IMR-90 (cell line): ENCODE measurements at regions of chr14 and their contacts with region 1.

Region 1: DNA sequence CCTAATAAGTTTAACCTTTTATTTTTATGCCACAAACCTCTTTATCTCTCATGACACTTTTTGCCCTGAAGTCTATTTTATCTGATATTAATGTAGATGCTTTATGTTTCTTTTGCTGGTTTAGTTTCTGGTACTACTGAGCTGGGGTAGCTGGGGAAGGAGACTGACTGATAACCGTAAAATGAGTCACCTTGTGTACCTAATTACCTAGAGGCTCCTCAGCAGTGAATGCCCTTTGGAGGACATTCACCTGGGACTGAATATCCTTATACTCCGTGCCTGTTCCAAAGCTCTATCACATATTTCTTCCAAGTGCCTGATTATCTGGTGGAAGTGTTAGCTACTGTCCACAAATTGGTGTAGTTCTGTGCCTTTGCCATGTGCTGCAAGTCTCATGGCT is 13.9 kb downstream of the ATL1 start:
- DNase-seq: no peak
- ATAC-seq: no peak
- H3K4me3 ChIP-seq: no peak overlapping the region
- H3K27ac ChIP-seq: no peak overlapping the region
- H3K4me1 ChIP-seq: peaks cover 2% of the 10 kb centered on the region; the same call in 1 of the 2 replicates
- H3K27me3 ChIP-seq: no peaks in the 10 kb centered on the region
- CTCF ChIP-seq: no peak
- POLR2A ChIP-seq: no peak
- RAD21 ChIP-seq: no peak

Region 2: GRCh38 chr14:50085570-50086320 is 488.1 kb before region 1 on chr14:
- CTCF ChIA-PET with region 1: no interaction called
- POLR2A ChIA-PET with region 1: no interaction called
- dilution Hi-C with region 1: no loop called
- in situ Hi-C with region 1: no loop called
- intact Hi-C with region 1: no loop called
- DNase-seq: peak; percentile 77
- ATAC-seq: peak; percentile 51; the same call in 1 of the 2 replicates
- H3K4me3 ChIP-seq: no peak overlapping the region
- H3K27ac ChIP-seq: no peak overlapping the region
- H3K4me1 ChIP-seq: peaks cover 13% of the 10 kb centered on the region
- H3K27me3 ChIP-seq: no peaks in the 10 kb centered on the region
- CTCF ChIP-seq: no peak
- POLR2A ChIP-seq: no peak
- RAD21 ChIP-seq: no peak

Region 3: GRCh38 chr14:50967790-50968189 is 393.9 kb after region 1 on chr14:
- CTCF ChIA-PET with region 1: no interaction called
- POLR2A ChIA-PET with region 1: interaction called, 10 read pairs
- dilution Hi-C with region 1: no loop called
- in situ Hi-C with region 1: no loop called
- intact Hi-C with region 1: no loop called
- DNase-seq: no peak
- ATAC-seq: no peak
- H3K4me3 ChIP-seq: no peak overlapping the region
- H3K27ac ChIP-seq: no peak overlapping the region
- H3K4me1 ChIP-seq: peaks cover 16% of the 10 kb centered on the region
- H3K27me3 ChIP-seq: peaks cover 8% of the 10 kb centered on the region
- CTCF ChIP-seq: no peak
- POLR2A ChIP-seq: no peak
- RAD21 ChIP-seq: no peak

Region 4: DNA sequence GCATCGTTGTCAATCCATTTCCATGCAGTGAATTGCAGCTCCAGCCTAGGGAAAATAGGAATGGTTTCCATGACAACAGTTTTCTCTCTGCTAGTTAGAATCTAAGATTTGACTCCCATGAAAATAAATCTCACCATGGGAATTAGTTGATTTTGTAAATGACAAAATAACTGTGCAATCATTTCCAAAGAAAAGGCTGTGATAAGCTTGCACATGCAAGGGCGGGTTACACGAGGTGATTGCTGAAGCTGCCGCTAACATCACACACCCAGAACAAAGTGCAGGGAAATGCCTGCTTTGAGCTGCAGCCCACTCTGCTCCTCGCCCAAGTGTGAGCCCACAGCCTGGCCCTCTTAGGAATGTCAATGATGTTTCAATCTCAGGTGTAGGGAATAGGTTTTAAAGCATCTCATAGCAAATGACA is 467.3 kb after region 1 on chr14:
- CTCF ChIA-PET with region 1: no interaction called
- POLR2A ChIA-PET with region 1: no interaction called
- dilution Hi-C with region 1: no loop called
- in situ Hi-C with region 1: no loop called
- intact Hi-C with region 1: loop called (anchors 10 kb)
- DNase-seq: no peak
- ATAC-seq: no peak
- H3K4me3 ChIP-seq: no peak overlapping the region
- H3K27ac ChIP-seq: no peak overlapping the region
- H3K4me1 ChIP-seq: no peaks in the 10 kb centered on the region
- H3K27me3 ChIP-seq: peaks cover 43% of the 10 kb centered on the region
- CTCF ChIP-seq: no peak
- POLR2A ChIP-seq: no peak
- RAD21 ChIP-seq: no peak